Heart right ventricle (tissue), 16 donors: ENCODE measurements at regions of chrX and their contacts with region 1.

Region 1: GRCh38 chrX:45070116-45071007 is 130.3 kb downstream of the DIPK2B start:
- DNase-seq: peak in 1 of 2 donors; percentile 8
- ATAC-seq: peak in 3 of 8 donors; percentile 39 to 64 (median 51)
- H3K4me3 ChIP-seq: no peak overlapping the region
- H3K27ac ChIP-seq: peak overlapping the region in 1 of 10 donors; percentile 39
- H3K4me1 ChIP-seq: peaks cover 0 to 61% (median 12%) of the 10 kb centered on the region in 9 donors
- H3K27me3 ChIP-seq: no peaks in the 10 kb centered on the region
- CTCF ChIP-seq: peak in 8 of 9 donors; percentile 29 to 84 (median 59)

Region 2: DNA sequence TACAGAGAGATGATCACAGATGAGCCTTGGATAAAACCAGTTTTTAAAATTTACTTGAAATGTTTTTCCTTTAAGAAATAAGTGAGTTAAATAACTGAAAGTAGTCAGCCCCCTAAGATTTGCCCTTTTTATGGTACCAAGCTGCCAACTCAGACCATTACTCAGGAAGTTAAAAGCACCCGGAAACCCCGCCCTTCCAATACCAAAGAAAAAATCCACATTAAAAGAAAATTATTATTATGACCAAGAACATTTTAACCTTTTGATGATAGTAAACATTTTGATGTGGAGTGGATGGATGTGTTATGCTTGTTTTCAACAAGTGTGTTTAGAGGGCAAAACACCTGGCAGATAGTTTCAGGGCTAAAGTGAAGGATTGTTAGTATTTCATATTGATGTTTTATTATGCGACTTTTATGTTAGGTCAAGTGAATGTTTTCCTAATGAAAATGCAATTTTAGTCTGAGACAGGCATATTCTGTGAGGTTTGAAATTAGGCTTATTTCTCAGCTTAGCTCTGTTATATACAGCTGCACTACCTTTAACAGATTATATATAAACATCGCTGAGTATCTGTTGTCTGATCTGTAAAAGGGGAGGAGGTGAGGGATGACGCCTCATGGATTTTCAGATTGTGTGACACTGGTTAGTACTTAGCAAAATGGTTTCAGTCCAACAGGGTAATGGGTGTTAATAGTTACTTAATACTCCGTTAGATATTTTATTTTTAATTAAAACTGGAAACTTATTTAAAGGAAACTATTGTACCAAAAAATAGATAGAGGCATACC is 108.3 kb before region 1 on chrX:
- intact Hi-C with region 1: loop called in 1 of 10 experiments (anchors 10 kb)
- DNase-seq: no peak
- ATAC-seq: no peak
- H3K4me3 ChIP-seq: no peak overlapping the region
- H3K27ac ChIP-seq: peak overlapping the region in 6 of 10 donors; percentile 36 to 63 (median 50)
- H3K4me1 ChIP-seq: peaks cover 0 to 46% (median 31%) of the 10 kb centered on the region in 9 donors
- H3K27me3 ChIP-seq: no peaks in the 10 kb centered on the region
- CTCF ChIP-seq: no peak

Region 3: DNA sequence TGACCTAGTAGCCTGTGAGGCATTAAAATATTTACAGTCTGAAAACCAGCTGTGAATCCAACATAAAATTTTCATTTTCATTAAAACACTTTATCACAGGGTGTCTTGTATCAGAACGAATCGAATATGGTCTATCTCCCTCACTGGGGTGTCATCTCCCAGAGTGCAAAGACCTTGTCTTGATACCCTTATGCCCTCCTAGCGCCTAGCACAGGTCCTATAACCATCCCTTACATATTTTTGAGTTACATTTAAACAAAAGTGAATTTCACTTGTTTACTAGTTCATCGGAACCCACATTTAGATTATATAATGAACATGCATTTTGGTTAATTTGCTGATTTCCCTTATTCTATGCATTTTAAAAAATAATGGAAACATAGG is 116.3 kb after region 1 on chrX:
- intact Hi-C with region 1: loop called in 1 of 10 experiments (anchors 5 kb)
- DNase-seq: no peak
- ATAC-seq: peak in 2 of 8 donors; percentile 10
- H3K4me3 ChIP-seq: peak overlapping the region in 7 of 10 donors; percentile 10 to 53 (median 46)
- H3K27ac ChIP-seq: peak overlapping the region in 2 of 10 donors; percentile 16 to 52
- H3K4me1 ChIP-seq: peaks cover 0 to 21% (median 8%) of the 10 kb centered on the region in 9 donors
- H3K27me3 ChIP-seq: peaks cover 0 to 33% (median 0%) of the 10 kb centered on the region in 7 donors
- CTCF ChIP-seq: no peak